ENCODE measurements at regions of chr2 and their contacts with region 1.

Region 1: DNA sequence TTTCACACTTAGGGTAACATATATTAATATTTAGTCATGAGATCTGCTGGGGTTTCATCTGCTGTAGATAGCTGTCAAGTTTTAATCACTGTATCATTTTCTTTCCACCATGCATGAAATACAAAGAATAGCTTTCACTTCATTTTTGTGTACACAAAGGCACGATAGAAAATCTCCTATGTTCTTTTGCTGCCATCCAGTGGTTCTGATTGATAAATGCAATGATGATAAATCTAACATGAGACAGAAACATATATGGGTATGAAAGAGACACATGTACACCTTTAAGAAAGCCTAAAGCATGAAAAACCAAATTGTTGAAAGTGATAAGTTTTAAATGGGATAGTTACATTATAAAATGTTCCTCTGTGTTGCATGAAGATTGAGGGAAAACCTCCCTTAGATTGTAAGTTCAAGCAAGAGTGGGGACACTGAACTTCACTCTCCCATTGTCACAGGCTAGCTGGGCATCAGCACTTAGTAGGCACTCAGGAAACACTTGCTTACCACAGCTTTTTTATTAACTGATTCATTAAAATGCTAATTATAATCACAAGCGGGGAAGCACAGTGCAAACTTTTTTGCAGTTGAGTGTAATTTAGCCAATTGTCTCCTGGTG is 31.2 kb downstream of the C1D start:
- DNase-seq: peak; percentile 48
- H3K4me3 ChIP-seq: no peak overlapping the region
- H3K27ac ChIP-seq: no peak overlapping the region
- H3K4me1 ChIP-seq: no peaks in the 10 kb centered on the region
- H3K27me3 ChIP-seq: no peaks in the 10 kb centered on the region
- CTCF ChIP-seq: peak; percentile 67 to 70

Region 2: GRCh38 chr2:67234439-67234838 is 797.2 kb before region 1 on chr2:
- CTCF ChIA-PET with region 1: no interaction called
- dilution Hi-C with region 1: no loop called
- in situ Hi-C with region 1: no loop called
- intact Hi-C with region 1: loop called (anchors 10 kb)
- DNase-seq: peak; percentile 17
- H3K4me3 ChIP-seq: no peak overlapping the region
- H3K27ac ChIP-seq: no peak overlapping the region
- H3K4me1 ChIP-seq: no peaks in the 10 kb centered on the region
- H3K27me3 ChIP-seq: no peaks in the 10 kb centered on the region
- CTCF ChIP-seq: peak in 1 of 2 donors; percentile 53

Region 3: DNA sequence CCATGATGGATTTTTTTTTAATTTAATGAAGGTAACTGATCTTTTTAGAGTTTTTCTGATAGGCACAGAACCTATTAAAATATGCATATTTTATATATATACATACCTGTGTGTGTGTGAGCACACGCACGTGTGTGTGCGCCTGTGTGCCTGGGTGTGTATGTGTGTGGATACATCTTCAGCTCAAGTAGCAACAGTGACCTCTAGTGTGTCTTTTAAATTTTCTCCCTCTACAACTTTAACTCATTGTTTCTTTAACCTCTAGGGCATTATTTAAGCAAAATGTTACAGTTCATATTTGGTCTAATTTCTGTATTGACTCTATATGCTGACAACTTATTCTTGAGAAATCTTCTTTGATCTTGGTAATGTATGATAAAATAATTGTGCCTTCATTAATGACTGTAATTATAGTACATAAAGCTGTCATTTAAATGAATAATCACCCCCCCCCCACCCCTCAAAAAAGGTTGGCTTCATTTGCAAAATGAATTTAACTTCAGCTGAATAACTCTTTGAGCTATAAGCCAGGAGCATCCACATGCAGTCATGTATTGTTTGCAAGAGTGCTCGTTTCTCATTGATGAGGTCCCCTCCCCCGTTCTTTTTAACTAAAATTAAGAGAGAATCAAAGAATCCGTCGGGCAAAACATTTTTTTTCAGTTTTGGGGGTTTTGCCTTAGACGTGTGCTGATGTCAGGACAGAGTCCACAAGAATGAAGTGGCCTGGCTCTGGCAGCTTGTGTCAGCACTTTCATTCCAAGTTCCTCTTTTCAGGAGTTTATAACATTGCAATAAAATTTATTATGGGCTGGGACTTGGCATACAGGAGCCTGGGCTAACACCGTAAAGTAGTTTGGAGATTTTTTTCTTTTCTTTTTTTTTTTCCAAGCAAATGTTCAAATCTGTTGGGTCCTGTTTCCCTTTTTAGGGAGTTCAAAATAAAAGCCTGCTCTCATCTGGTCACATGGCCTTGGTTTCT is 554.6 kb before region 1 on chr2:
- CTCF ChIA-PET with region 1: no interaction called
- dilution Hi-C with region 1: no loop called
- in situ Hi-C with region 1: no loop called
- intact Hi-C with region 1: loop called (anchors 5 kb)
- DNase-seq: peak; percentile 41
- H3K4me3 ChIP-seq: no peak overlapping the region
- H3K27ac ChIP-seq: no peak overlapping the region
- H3K4me1 ChIP-seq: no peaks in the 10 kb centered on the region
- H3K27me3 ChIP-seq: no peaks in the 10 kb centered on the region
- CTCF ChIP-seq: peak; percentile 52 to 72

Region 4: DNA sequence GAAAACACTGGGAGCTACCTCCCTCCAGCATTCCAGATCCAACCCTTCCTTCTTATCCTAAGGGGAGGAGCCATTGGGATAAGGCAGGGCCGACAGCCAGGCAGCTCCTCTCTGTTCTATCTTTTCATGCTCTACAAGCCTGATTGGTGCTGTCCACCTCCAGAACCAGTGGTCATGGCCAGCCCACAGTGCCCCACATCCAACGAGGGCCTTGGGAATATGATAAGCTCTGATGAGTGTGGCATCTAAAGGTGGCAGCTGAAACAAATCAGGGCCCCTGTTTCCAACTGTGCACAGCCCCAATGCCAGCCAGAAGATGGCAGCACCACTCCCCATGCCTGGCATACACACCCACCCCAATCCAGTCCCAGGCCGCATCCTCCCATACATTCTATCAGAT is 298.1 kb before region 1 on chr2:
- CTCF ChIA-PET with region 1: interaction called, 3 read pairs
- dilution Hi-C with region 1: loop called (anchors 25 kb)
- in situ Hi-C with region 1: no loop called
- intact Hi-C with region 1: loop called (anchors 1 kb)
- DNase-seq: peak; percentile 6
- H3K4me3 ChIP-seq: no peak overlapping the region
- H3K27ac ChIP-seq: no peak overlapping the region
- H3K4me1 ChIP-seq: no peaks in the 10 kb centered on the region
- H3K27me3 ChIP-seq: no peaks in the 10 kb centered on the region
- CTCF ChIP-seq: peak; percentile 50 to 83

Region 5: DNA sequence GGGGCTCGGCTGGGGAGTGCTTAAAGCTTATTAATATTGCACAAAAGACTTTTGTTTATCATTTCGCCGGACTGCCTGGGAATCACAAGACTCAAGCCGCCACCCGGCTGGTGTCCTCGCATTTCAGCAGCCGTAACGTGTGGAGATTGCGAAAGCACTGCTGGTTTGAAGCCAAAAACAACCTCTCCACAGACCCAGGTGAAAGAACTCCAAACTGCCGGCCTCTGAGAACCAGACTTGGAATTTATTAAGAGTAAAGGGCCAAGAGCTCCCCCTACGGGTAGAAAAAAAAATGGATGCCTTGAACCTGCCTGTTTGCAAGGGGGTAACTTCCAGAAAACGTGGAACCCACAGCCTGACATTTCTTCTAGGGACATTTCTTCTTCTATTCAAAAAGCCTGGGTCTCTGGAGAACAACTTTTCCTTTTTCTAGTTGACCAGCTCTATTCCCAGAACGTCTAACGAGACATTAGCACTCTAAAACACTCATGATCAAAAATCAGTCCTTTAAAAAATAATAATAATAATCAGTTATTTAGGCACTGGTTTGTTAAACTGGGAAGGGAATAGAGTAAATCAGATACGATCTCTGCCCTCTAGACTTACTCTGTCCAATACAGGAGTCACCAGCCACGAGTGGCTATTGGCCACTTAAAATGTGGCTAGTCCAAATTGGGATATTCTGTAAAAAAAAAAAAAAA is 185.1 kb before region 1 on chr2:
- CTCF ChIA-PET with region 1: interaction called, 3 read pairs
- dilution Hi-C with region 1: no loop called
- in situ Hi-C with region 1: no loop called
- intact Hi-C with region 1: loop called (anchors 1 kb)
- DNase-seq: peak; percentile 91
- H3K4me3 ChIP-seq: no peak overlapping the region
- H3K27ac ChIP-seq: peak overlapping the region; percentile 15
- H3K4me1 ChIP-seq: peaks cover 5% of the 10 kb centered on the region
- H3K27me3 ChIP-seq: no peaks in the 10 kb centered on the region
- CTCF ChIP-seq: peak; percentile 53 to 77

Measured in mammary epithelial cell (primary cell).